ENCODE measurements at regions of chr1 and their contacts with region 1.

Region 1: GRCh38 chr1:248807067-248807737 is 18.5 kb downstream of the SH3BP5L start:
- DNase-seq: peak; percentile 69 to 75 (median 73)
- ATAC-seq: peak; percentile 81 to 88 (median 84)
- H3K4me3 ChIP-seq: no peak overlapping the region
- H3K27ac ChIP-seq: no peak overlapping the region
- H3K4me1 ChIP-seq: peaks cover 0 to 25% (median 0%) of the 10 kb centered on the region in 4 donors
- H3K27me3 ChIP-seq: no peaks in the 10 kb centered on the region
- CTCF ChIP-seq: peak; percentile 87 to 93 (median 90)
- POLR2A ChIP-seq: no peak

Region 2: DNA sequence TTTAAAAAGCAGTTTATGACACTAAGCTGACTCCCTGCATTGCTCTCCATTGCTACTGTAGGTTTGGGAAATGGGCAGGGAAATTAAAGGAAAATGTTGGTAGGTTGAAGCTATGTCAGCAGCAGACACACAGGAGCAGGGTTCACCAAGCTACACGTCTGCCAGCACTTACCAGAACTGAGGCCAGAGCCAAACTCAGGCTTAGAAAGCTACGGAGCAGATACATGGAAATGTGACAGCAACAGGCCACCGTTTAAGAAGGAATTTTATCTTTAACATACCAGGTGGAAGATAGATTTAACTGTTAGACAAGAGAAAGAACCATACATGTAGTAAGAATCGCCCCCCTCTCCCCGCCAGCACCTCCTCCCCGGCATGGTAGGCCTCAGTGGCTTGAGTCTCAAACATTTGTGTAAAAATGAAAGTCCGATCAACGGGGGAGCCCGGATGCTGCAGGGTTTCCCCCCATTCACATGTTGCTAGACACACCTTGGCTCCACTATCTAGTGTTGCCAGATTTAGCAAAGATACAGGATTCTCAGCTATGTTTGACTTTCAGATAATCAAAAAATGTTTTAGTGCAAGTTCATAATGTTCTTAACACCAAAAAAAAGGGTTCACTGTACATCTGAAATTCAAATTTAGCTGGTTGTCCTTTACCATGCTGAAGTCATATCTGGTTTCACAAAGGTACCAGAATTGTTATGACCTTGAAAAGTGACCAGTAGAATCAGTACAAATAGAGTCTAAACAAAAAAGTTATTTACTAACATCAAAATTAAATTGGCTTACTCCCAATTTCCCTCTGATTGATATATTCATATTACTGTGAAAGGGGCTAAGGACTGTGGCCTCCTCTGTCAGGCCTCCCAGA is 179.0 kb before region 1 on chr1:
- intact Hi-C with region 1: loop called in 1 of 2 experiments (anchors 5 kb)
- DNase-seq: no peak
- ATAC-seq: no peak
- H3K4me3 ChIP-seq: no peak overlapping the region
- H3K27ac ChIP-seq: no peak overlapping the region
- H3K4me1 ChIP-seq: no peaks in the 10 kb centered on the region
- H3K27me3 ChIP-seq: no peaks in the 10 kb centered on the region
- CTCF ChIP-seq: no peak
- POLR2A ChIP-seq: no peak

Region 3: DNA sequence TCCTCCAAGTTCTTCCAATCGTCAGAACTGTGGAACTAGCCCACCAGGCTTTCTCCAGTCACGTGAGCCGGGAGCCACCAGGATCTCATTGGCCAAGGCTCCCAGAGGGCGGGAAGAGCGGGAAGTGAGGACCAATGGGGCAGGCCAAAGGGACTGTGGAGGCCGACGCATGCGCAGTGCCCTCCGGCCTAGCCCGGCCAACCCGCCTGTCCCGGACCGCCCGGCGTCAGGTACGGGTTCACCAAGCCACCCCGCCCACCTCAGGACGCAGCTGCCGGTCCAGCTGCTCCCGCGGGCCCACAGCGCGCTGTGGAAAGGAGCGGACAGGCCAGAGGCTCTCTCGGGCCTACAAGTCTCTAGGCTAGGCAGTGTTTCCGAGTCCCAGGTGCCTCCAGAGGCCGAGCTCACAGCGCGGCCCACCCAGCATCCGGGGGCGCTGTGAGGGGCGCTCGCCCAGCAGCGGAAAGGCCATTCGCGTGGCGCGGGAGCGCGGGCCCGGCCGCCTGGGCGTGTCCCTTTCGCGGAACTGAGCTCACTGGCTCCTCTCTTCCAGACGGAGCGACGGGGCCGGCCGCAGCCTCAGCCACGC is 115.5 kb before region 1 on chr1:
- intact Hi-C with region 1: loop called in 1 of 2 experiments (anchors 5 kb)
- DNase-seq: no peak
- ATAC-seq: peak in 1 of 4 donors; percentile 23
- H3K4me3 ChIP-seq: no peak overlapping the region
- H3K27ac ChIP-seq: no peak overlapping the region
- H3K4me1 ChIP-seq: no peaks in the 10 kb centered on the region
- H3K27me3 ChIP-seq: no peaks in the 10 kb centered on the region
- CTCF ChIP-seq: no peak
- POLR2A ChIP-seq: no peak

Region 4: GRCh38 chr1:248703674-248704073 is 103.5 kb before region 1 on chr1:
- intact Hi-C with region 1: loop called in 1 of 2 experiments (anchors 5 kb)
- DNase-seq: no peak
- ATAC-seq: peak in 1 of 4 donors; percentile 31
- H3K4me3 ChIP-seq: no peak overlapping the region
- H3K27ac ChIP-seq: no peak overlapping the region
- H3K4me1 ChIP-seq: no peaks in the 10 kb centered on the region
- H3K27me3 ChIP-seq: no peaks in the 10 kb centered on the region
- CTCF ChIP-seq: peak; percentile 29 to 37 (median 34)
- POLR2A ChIP-seq: no peak

Region 5: GRCh38 chr1:248730507-248731335 is 76.5 kb before region 1 on chr1:
- intact Hi-C with region 1: no loop called
- DNase-seq: no peak
- ATAC-seq: no peak
- H3K4me3 ChIP-seq: no peak overlapping the region
- H3K27ac ChIP-seq: no peak overlapping the region
- H3K4me1 ChIP-seq: no peaks in the 10 kb centered on the region
- H3K27me3 ChIP-seq: no peaks in the 10 kb centered on the region
- CTCF ChIP-seq: no peak
- POLR2A ChIP-seq: no peak

Measured in right lobe of liver (tissue), 6 donors.